Ascending aorta (tissue), 2 donors: ENCODE measurements at regions of chr5 and their contacts with region 1.

Region 1: DNA sequence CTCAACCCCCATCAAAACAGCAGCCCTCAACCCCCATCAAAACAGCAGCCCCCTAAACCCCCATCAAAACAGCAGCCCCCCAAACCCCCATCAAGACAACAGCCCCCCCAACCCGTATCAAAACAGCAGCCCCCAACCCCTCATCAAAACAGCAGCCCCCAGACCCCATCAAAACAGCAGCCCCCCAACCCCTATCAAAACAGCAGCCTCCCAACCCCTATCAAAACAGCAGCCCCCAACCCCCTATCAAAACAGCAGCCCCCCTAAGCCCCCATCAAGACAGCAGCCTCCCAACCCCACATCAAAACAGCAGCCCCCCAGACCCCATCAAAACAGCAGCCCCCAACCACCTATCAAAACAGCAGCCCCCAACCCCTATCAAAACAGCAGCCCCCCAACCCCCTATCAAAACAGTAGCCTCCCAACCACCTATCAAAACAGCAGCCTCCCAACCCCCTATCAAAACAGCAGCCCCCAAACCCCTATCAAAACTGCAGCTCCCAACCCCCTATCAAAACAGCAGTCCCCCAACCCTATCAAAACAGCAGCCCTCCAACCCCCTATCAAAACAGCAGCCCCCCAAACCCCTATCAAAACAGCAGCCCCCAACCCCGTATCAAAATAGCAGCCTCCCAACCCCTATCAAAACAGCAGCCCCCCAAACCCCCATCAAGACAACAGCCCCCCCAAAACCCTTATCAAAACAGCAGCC is 1.2 kb downstream of the TPPP start:
- DNase-seq: no peak
- H3K4me3 ChIP-seq: peak overlapping the region; percentile 74 to 90
- H3K27ac ChIP-seq: no peak overlapping the region
- H3K4me1 ChIP-seq: peaks cover 0 to 3% of the 10 kb centered on the region in 2 donors
- H3K27me3 ChIP-seq: no peaks in the 10 kb centered on the region
- CTCF ChIP-seq: no peak

Region 2: DNA sequence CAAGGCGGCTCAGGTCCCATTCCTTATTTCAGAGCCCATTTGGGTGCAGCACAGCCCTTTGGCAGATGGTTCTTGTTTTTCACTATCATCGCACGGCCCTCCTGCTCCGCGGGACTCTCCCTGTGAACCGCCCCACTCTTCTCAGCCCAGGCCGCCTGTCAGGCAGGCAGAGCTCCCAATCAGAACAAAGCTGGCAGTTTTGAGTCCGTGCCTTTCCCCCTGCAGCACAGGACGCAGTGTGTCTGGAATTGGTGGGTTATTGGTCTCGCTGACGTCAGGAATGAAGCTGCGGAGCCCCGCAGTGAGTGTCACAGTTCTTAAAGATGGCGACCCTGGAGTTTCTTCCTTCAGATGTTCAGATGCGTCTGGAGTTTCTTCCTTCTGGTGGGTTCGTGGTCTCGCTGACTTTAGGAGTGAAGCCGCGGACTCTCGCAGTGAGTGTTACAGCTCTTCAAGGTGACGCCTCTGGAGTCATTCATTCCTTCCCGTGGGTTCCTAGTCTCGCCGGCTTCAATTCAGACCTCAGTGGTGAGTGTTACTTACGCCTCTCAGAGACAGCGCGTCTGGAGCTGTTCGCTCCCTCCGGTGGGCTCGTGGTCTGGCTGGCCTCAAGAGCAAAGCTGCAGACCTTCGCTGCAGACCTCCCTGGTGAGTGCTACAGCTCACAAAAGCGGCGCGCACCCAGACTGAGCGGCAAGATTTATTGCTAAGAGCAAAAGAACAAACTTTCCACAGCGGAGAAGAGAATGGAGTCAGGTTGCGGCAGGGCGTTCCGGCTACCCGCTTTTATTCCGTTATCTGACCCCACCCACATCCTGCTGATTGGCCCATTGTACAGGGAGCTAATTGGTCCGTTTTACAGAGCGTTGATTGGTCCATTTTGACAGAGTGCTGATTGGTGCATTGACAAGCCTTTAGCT is 85.1 kb after region 1 on chr5:
- intact Hi-C with region 1: no loop called
- DNase-seq: no peak
- H3K4me3 ChIP-seq: no peak overlapping the region
- H3K27ac ChIP-seq: no peak overlapping the region
- H3K4me1 ChIP-seq: no peaks in the 10 kb centered on the region
- H3K27me3 ChIP-seq: no peaks in the 10 kb centered on the region
- CTCF ChIP-seq: no peak

Region 3: GRCh38 chr5:892394-893136 is 200.6 kb after region 1 on chr5 and contains the starts of genes BRD9 and TRIP13:
- intact Hi-C with region 1: loop called (anchors 2 kb)
- DNase-seq: peak in 1 of 2 donors; percentile 84
- H3K4me3 ChIP-seq: peak within 1 kb of the TSS; percentile 88 to 100
- H3K27ac ChIP-seq: peak within 1 kb of the TSS; percentile 82 to 90
- H3K4me1 ChIP-seq: peaks cover 13% of the 10 kb centered on the region in 2 donors
- H3K27me3 ChIP-seq: no peaks in the 10 kb centered on the region
- CTCF ChIP-seq: peak in 1 of 3 experiments; percentile 4
- total RNA-seq, gene BRD9: 13.6 TPM
- total RNA-seq, gene TRIP13: not detected

Region 4: DNA sequence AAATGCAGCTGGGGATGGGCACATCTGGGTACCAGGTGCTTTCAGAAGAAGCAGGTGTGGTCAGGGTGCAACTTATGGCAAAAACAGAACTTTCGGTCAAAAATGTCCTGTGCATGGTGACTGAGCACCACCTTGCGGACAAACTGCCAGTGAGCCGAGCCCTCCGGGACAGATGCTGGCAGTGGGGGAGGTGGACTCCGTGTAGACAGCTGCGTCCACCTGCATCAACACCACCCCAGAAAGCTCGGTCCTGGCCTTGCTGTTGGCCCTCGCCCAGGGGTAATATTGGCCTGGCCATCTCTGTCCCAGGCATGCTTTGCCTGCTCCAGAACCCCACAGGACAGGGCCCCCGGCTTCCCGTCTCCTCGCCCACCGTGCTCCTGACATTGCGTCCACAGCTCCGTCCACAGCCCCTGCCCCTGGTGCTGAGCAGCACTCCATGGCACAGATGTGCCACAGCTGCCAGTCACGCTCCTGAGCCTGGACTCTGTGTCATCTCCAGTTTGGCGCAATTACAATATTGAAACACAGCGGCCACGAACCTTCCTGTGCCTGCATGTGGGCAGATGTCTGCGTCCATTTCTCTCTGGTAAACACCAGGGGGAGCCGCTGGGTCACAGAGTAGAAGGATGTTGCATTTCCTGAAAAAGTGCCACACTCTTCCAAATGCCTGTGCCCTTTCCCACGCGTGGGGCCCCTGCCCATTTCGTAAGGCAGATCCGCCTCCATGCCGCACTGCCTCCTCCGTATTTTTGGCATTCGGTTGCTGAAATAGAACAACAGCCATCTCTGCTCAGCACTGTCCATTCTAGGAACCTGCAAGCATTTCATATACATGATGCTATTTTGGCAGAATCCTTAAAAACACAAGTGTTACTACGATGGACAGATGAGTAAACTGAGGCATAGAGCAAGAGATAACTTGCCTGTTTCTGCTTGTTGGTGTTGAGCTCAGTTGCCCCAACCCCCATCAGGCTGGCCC is 476.0 kb after region 1 on chr5:
- intact Hi-C with region 1: no loop called
- DNase-seq: peak in 1 of 2 donors; percentile 76
- H3K4me3 ChIP-seq: no peak overlapping the region
- H3K27ac ChIP-seq: no peak overlapping the region
- H3K4me1 ChIP-seq: no peaks in the 10 kb centered on the region
- H3K27me3 ChIP-seq: no peaks in the 10 kb centered on the region
- CTCF ChIP-seq: peak; percentile 50 to 66 (median 63)